PC-3 (cell line): ENCODE measurements at regions of chr10 and their contacts with region 1.

Region 1: GRCh38 chr10:4704034-4704545 is 121.9 kb upstream of the AKR1E2 start:
- DNase-seq: peak; percentile 90
- ATAC-seq: peak; percentile 97
- H3K4me3 ChIP-seq: no peak overlapping the region
- H3K27ac ChIP-seq: peak overlapping the region; percentile 93
- H3K4me1 ChIP-seq: peaks cover 43% of the 10 kb centered on the region
- H3K27me3 ChIP-seq: no peaks in the 10 kb centered on the region
- CTCF ChIP-seq: no peak

Region 2: DNA sequence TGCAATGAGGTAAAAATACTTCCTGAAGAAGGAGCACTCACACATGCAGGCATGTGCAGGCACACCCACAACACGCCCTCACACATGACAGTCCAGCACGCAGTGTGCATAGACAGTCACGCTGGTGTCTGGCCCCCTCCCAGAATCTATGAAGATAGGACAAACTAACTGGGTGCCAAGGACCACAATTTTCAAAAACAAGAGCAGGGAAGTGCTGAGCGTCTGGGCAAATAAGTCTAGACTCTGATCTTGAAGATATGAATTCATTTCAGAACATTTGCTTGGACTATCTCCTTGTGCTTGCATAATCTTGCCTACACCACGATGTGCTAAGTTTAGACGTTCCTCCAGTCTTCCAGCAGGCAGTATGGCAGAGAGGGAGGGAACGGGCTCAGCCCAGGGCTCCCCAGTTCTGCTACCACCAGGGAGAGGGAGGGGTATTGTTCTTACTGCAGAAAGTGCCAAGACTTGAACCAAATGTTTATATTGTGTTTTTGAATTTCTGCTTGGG is 642.6 kb before region 1 on chr10:
- CTCF ChIA-PET with region 1: no interaction called
- POLR2A ChIA-PET with region 1: no interaction called
- intact Hi-C with region 1: no loop called
- DNase-seq: no peak
- ATAC-seq: no peak
- H3K4me3 ChIP-seq: no peak overlapping the region
- H3K27ac ChIP-seq: no peak overlapping the region
- H3K4me1 ChIP-seq: peaks cover 17% of the 10 kb centered on the region
- H3K27me3 ChIP-seq: no peaks in the 10 kb centered on the region
- CTCF ChIP-seq: no peak

Region 3: GRCh38 chr10:4649886-4650508 is 54.1 kb before region 1 on chr10:
- CTCF ChIA-PET with region 1: no interaction called
- POLR2A ChIA-PET with region 1: no interaction called
- intact Hi-C with region 1: no loop called
- DNase-seq: no peak
- ATAC-seq: peak; percentile 22; the same call in 1 of the 2 replicates
- H3K4me3 ChIP-seq: no peak overlapping the region
- H3K27ac ChIP-seq: no peak overlapping the region
- H3K4me1 ChIP-seq: peaks cover 11% of the 10 kb centered on the region
- H3K27me3 ChIP-seq: no peaks in the 10 kb centered on the region
- CTCF ChIP-seq: no peak

Region 4: DNA sequence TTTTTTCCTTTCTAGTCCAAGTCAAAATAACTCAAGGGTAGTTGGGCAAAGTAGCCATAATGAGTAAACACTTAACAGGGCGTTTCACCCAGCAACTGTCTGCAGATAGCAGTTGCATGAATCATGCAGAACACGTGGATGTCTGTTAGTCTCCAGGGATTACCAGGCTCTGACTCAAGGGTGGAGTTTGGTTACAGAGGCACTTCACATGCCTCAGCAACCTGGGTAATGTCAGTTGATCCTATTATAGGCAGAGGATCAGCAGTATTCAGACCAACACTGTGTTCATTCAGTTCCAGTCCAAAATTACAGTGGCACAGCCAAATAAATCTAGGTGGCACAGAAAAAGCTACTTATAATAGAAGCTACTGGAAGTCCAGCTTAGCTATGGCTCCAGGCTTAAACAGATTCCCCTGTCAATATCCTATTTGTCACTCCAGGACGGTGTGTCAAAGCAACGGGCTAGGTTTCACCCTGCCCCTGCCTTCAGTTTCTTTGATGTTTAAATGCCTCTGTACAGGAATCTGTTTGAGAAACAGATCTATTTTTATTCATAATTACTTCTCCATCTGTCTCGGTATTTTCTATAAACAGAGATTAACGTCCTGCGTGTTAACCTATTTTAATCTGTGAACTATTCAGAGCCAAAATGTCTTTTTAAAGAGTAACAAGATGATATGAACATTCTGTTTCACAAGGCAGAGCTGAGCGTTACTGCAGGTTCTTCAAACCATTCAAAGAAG is 40.8 kb before region 1 on chr10:
- CTCF ChIA-PET with region 1: no interaction called
- POLR2A ChIA-PET with region 1: interaction called, 6 read pairs
- intact Hi-C with region 1: loop called (anchors 1 kb)
- DNase-seq: peak; percentile 93
- ATAC-seq: peak; percentile 93
- H3K4me3 ChIP-seq: no peak overlapping the region
- H3K27ac ChIP-seq: peak overlapping the region; percentile 98
- H3K4me1 ChIP-seq: peaks cover 45% of the 10 kb centered on the region
- H3K27me3 ChIP-seq: no peaks in the 10 kb centered on the region
- CTCF ChIP-seq: no peak

Region 5: DNA sequence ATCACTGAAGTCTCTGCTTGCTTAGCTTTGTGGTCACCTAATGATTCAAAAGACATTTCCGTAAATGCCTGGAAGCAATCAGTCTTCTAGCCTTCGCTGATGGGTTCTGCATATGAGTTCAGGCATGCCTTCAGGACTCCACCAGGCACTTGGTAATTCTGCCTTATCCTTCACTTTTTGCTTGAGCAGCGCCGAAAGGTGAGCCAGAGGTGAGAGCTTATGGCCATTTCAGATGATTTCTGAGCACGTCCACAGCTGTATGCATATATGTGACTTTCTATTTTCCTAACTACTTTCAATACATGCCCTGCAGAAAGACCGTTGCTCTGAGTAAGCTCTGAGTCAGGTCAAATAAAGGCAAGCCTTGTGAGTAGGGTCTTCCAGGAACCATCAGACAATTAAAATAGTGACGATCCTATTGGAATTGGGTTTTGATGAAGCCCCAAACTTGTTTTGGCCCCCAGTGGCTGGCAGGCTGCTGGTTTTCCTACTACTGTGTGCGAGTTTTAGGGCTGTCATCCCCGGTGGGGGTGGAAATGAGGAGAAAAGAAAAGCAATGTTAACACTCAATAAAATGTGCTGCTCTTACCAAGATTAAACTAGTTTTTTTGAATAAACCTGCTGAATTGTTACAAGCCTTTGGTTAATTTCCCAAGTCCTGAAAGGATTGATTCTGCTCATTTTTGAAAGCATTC is 32.5 kb before region 1 on chr10:
- CTCF ChIA-PET with region 1: no interaction called
- POLR2A ChIA-PET with region 1: no interaction called
- intact Hi-C with region 1: loop called (anchors 2 kb)
- DNase-seq: peak; percentile 88
- ATAC-seq: peak; percentile 89
- H3K4me3 ChIP-seq: peak overlapping the region; percentile 44; the same call in 1 of the 2 replicates
- H3K27ac ChIP-seq: peak overlapping the region; percentile 99
- H3K4me1 ChIP-seq: peaks cover 60% of the 10 kb centered on the region
- H3K27me3 ChIP-seq: no peaks in the 10 kb centered on the region
- CTCF ChIP-seq: no peak

Region 6: GRCh38 chr10:4725917-4726606 is 22.0 kb after region 1 on chr10:
- CTCF ChIA-PET with region 1: no interaction called
- POLR2A ChIA-PET with region 1: interaction called, 9 read pairs
- intact Hi-C with region 1: loop called (anchors 1 kb)
- DNase-seq: peak; percentile 83
- ATAC-seq: peak; percentile 94
- H3K4me3 ChIP-seq: peak overlapping the region; percentile 34; the same call in 1 of the 2 replicates
- H3K27ac ChIP-seq: peak overlapping the region; percentile 98
- H3K4me1 ChIP-seq: peaks cover 39% of the 10 kb centered on the region
- H3K27me3 ChIP-seq: no peaks in the 10 kb centered on the region
- CTCF ChIP-seq: no peak

Region 7: DNA sequence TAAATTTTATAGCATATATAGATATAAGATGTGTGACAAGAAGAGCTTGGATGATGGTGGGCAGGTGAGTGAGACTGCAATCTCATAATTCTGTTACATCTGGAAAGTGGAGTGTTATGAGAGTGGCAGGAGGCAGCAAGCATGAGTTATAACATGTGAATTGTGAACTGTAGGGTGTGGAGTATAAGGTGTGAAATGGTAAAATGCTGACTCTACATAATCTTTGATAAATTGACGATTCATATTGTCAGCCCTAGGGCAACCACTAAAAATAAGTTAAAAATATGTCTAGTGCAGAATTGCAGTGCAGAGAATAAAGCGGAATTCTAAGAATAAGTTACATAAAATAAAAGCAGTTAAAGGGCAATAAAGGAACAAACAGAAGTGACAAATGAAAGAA is 47.1 kb after region 1 on chr10:
- CTCF ChIA-PET with region 1: no interaction called
- POLR2A ChIA-PET with region 1: no interaction called
- intact Hi-C with region 1: loop called (anchors 5 kb)
- DNase-seq: no peak
- ATAC-seq: no peak
- H3K4me3 ChIP-seq: no peak overlapping the region
- H3K27ac ChIP-seq: no peak overlapping the region
- H3K4me1 ChIP-seq: no peaks in the 10 kb centered on the region
- H3K27me3 ChIP-seq: no peaks in the 10 kb centered on the region
- CTCF ChIP-seq: no peak